HepG2 (cell line): ENCODE measurements at regions of chr16 and their contacts with region 1.

Region 1: GRCh38 chr16:59249011-59249410 is 514.9 kb upstream of the GOT2 start:
- DNase-seq: peak; percentile 10
- ATAC-seq: peak; percentile 90
- H3K4me3 ChIP-seq: no peak overlapping the region
- H3K27ac ChIP-seq: no peak overlapping the region
- H3K4me1 ChIP-seq: no peaks in the 10 kb centered on the region
- H3K27me3 ChIP-seq: no peaks in the 10 kb centered on the region
- CTCF ChIP-seq: peak; percentile 48
- EP300 ChIP-seq: no peak
- POLR2A ChIP-seq: no peak
- RAD21 ChIP-seq: no peak

Region 2: DNA sequence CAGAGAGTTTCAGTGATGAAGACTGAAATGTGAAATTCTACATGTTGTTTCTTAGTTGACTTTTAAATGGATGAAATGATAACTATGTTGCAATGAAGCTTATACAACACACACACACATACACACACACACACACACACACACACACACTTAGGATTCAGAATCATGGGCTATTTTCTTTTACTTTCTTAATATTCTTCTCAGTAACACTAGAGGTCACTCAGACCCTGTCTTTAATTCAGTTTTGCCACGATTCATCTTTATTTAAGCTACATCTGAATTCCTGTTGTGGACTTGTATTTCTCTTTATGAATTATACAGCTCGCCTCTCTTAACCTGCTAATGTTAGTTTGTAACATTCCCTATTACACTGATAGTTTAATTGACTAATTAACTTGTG is 405.3 kb before region 1 on chr16:
- CTCF ChIA-PET with region 1: interaction called, 3 read pairs
- POLR2A ChIA-PET with region 1: no interaction called
- in situ Hi-C with region 1: no loop called
- intact Hi-C with region 1: loop called (anchors 10 kb)
- DNase-seq: peak; percentile 44
- ATAC-seq: peak; percentile 26; the same call in 1 of the 3 replicates
- H3K4me3 ChIP-seq: no peak overlapping the region
- H3K27ac ChIP-seq: no peak overlapping the region
- H3K4me1 ChIP-seq: peaks cover 18% of the 10 kb centered on the region
- H3K27me3 ChIP-seq: no peaks in the 10 kb centered on the region
- CTCF ChIP-seq: peak; percentile 60
- EP300 ChIP-seq: no peak
- POLR2A ChIP-seq: no peak
- RAD21 ChIP-seq: peak; percentile 49

Region 3: DNA sequence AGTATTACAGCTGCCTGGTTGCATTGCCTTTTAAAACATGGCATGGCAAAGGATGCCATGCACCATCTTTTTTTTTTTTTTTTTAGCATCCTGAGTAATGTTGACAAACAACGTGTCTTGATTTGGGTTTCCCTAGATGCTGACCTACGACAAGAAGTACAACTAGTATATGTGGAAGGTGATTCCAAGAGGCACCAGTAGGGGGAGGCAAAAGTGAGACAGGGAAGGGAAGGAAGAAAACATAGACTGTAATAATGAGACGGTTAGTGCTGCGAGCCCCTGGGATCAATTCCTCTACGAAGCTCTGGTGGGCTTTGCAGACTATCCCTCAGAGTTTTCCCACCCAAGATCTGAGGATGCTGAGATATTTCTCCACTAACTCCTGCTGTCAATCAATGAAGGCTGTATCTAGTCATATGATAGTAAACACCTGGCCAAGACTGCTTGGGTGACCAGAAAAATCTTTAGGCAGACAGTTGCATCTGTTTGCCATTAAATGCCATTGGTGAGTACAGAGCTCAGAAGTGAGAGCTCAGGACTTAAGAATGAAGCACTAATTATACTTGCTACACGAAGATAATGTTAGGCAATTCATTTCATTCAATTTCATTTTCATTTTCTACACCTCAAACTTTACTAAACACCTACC is 56.3 kb before region 1 on chr16:
- CTCF ChIA-PET with region 1: no interaction called
- POLR2A ChIA-PET with region 1: no interaction called
- in situ Hi-C with region 1: no loop called
- intact Hi-C with region 1: loop called (anchors 1 kb)
- DNase-seq: peak; percentile 42
- ATAC-seq: peak; percentile 89
- H3K4me3 ChIP-seq: no peak overlapping the region
- H3K27ac ChIP-seq: no peak overlapping the region
- H3K4me1 ChIP-seq: no peaks in the 10 kb centered on the region
- H3K27me3 ChIP-seq: no peaks in the 10 kb centered on the region
- CTCF ChIP-seq: peak; percentile 66
- EP300 ChIP-seq: no peak
- POLR2A ChIP-seq: no peak
- RAD21 ChIP-seq: no peak

Region 4: GRCh38 chr16:59263955-59264354 is 14.9 kb after region 1 on chr16:
- CTCF ChIA-PET with region 1: no interaction called
- POLR2A ChIA-PET with region 1: no interaction called
- in situ Hi-C with region 1: no loop called
- intact Hi-C with region 1: no loop called
- DNase-seq: no peak
- ATAC-seq: no peak
- H3K4me3 ChIP-seq: no peak overlapping the region
- H3K27ac ChIP-seq: no peak overlapping the region
- H3K4me1 ChIP-seq: no peaks in the 10 kb centered on the region
- H3K27me3 ChIP-seq: no peaks in the 10 kb centered on the region
- CTCF ChIP-seq: no peak
- EP300 ChIP-seq: no peak
- POLR2A ChIP-seq: no peak
- RAD21 ChIP-seq: no peak

Region 5: DNA sequence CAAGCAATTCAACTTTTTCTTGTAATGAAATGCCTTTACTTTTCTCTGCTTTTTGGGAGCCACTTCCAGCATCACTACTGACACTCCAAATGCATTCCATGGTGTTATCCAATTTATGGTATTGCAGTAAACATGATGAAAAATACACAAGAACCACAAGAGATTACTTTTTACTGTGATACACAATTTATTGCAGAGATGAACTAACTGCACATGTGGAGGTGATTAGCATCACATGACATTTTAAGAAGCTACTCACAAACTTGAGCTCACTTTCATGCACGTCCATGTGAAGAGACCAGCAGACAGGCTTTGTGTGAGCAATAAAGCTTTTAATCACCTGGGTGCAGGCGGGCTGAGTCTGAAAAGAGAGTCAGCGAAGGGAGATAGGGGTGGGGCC is 265.6 kb after region 1 on chr16:
- CTCF ChIA-PET with region 1: no interaction called
- POLR2A ChIA-PET with region 1: no interaction called
- in situ Hi-C with region 1: no loop called
- intact Hi-C with region 1: no loop called
- DNase-seq: no peak
- ATAC-seq: no peak
- H3K4me3 ChIP-seq: no peak overlapping the region
- H3K27ac ChIP-seq: no peak overlapping the region
- H3K4me1 ChIP-seq: no peaks in the 10 kb centered on the region
- H3K27me3 ChIP-seq: no peaks in the 10 kb centered on the region
- CTCF ChIP-seq: no peak
- EP300 ChIP-seq: no peak
- POLR2A ChIP-seq: no peak
- RAD21 ChIP-seq: no peak